ENCODE measurements at regions of chr4 and their contacts with region 1.

Region 1: DNA sequence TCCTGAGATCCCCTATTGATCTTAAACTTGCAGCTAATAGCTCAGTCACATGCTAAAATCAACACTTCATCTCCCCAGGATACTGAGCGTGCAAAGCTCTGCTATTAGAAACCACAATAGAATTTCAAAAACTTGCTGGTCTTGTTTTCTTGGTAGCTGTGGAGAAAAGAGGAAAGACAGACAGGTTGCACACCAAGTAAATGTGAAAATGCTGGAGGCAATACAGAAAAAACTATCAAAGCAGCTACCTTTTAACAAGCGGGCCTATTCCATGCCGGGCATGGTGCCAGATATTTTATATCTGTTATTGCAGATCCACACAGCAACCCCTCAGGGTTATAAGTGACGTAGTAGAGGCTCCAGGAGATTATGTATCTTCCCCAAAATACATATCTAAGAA is 171.9 kb downstream of the DCTD start:
- DNase-seq: no peak
- ATAC-seq: no peak

Region 2: GRCh38 chr4:182680234-182680653 is 65.0 kb before region 1 on chr4:
- intact Hi-C with region 1: loop called in 1 of 2 experiments (anchors 5 kb)
- DNase-seq: peak; percentile 54
- ATAC-seq: peak; percentile 77 to 91